ENCODE measurements at regions of chr3 and their contacts with region 1.

Region 1: GRCh38 chr3:97793420-97794019 is 28.3 kb upstream of the CRYBG3 start:
- DNase-seq: peak in 1 of 5 donors; percentile 8
- ATAC-seq: peak in 1 of 4 donors; percentile 26
- H3K4me3 ChIP-seq: no peak overlapping the region
- H3K27ac ChIP-seq: no peak overlapping the region
- H3K4me1 ChIP-seq: no peaks in the 10 kb centered on the region
- H3K27me3 ChIP-seq: no peaks in the 10 kb centered on the region
- CTCF ChIP-seq: peak; percentile 69 to 92 (median 83)
- POLR2A ChIP-seq: no peak

Region 2: GRCh38 chr3:97932387-97932801 is 138.9 kb after region 1 on chr3:
- intact Hi-C with region 1: loop called in 1 of 10 experiments (anchors 10 kb)
- DNase-seq: peak in 4 of 5 donors; percentile 20 to 32 (median 26)
- ATAC-seq: peak; percentile 73 to 82 (median 74)
- H3K4me3 ChIP-seq: no peak overlapping the region
- H3K27ac ChIP-seq: peak overlapping the region in 1 of 12 donors; percentile 27
- H3K4me1 ChIP-seq: peaks cover 0 to 14% (median 4%) of the 10 kb centered on the region in 12 donors
- H3K27me3 ChIP-seq: no peaks in the 10 kb centered on the region
- CTCF ChIP-seq: peak in 1 of 12 donors; percentile 20
- POLR2A ChIP-seq: no peak

Region 3: GRCh38 chr3:97940034-97940433 is 146.5 kb after region 1 on chr3:
- intact Hi-C with region 1: loop called in 7 of 10 experiments (anchors 2 to 10 kb)
- DNase-seq: no peak
- ATAC-seq: no peak
- H3K4me3 ChIP-seq: no peak overlapping the region
- H3K27ac ChIP-seq: no peak overlapping the region
- H3K4me1 ChIP-seq: no peaks in the 10 kb centered on the region
- H3K27me3 ChIP-seq: no peaks in the 10 kb centered on the region
- CTCF ChIP-seq: peak in 7 of 12 donors; percentile 5 to 42 (median 33)
- POLR2A ChIP-seq: no peak

Region 4: DNA sequence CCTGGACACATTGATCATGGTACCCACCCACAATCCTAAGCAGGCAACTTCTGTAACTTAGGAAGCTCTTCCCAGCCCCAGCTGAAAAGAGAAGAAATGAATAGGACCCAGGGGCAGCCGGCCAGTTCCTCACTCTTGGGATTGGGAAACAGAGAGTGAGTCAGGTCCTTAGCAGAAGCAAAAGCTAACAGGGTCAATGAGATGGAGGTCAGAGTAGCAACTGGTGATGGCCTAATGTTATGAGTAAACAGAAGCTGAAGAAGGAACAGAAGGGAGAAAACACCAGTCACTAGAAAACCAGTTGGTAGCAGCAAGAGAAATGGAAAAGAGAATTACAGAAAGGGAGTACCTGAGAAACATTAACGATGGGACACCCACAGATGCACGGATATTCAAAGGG is 158.8 kb after region 1 on chr3:
- intact Hi-C with region 1: loop called in 4 of 10 experiments (anchors 5 to 10 kb)
- DNase-seq: peak in 1 of 5 donors; percentile 44
- ATAC-seq: peak in 2 of 4 donors; percentile 65 to 84
- H3K4me3 ChIP-seq: no peak overlapping the region
- H3K27ac ChIP-seq: no peak overlapping the region
- H3K4me1 ChIP-seq: no peaks in the 10 kb centered on the region
- H3K27me3 ChIP-seq: no peaks in the 10 kb centered on the region
- CTCF ChIP-seq: no peak
- POLR2A ChIP-seq: no peak

Region 5: DNA sequence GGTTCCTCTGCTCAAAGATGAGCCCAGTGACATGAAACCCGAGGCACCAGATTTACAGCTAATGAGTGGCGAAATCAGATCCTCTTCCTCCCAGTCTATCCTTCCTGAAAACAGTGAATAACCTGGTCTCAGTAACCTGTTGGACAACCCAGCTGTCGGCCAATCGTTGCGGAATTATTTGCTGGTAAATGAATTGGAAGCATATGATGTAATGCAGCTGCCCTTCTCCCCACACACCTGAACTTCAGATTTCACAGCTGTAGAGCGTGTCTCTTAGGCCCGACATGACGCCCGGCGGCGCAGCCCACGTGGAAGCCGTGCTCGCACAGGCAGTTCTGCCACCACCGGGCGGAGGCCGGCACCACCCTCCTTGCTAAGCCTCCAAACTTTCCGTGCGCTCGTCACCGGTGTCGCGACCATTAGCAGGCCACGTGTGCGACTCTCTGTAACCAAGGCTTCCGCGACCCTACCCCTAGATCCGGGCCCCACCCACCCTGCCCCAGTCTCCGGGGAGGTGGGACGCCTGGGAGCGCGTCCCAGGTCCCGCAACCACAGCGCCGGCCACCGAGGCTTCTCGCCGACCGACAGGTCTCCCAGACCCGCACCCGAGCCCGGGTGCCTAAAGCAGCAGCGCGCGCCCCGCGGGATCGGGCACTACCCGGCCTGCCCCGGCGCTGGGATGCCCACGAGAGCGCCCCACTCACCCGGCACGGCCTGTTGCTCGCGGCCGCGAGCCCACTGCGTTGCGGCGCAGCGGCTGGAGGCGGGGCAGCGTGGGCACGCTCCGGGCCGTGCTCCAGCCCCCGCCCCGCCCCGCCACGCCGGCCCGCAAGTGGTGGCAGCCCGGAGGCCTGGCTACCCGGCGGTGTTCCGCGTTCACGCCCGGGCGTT is 178.4 kb after region 1 on chr3 and contains the start of gene RIOX2:
- intact Hi-C with region 1: loop called in 1 of 10 experiments (anchors 5 kb)
- DNase-seq: peak; percentile 73 to 88 (median 80)
- ATAC-seq: peak; percentile 80 to 99 (median 96)
- H3K4me3 ChIP-seq: peak within 1 kb of the TSS; percentile 72 to 94 (median 81)
- H3K27ac ChIP-seq: peak within 1 kb of the TSS in 11 of 12 donors; percentile 57 to 88 (median 80)
- H3K4me1 ChIP-seq: peaks cover 0 to 25% (median 8%) of the 10 kb centered on the region in 12 donors
- H3K27me3 ChIP-seq: no peaks in the 10 kb centered on the region
- CTCF ChIP-seq: peak in 4 of 12 donors; percentile 14 to 31 (median 26)
- POLR2A ChIP-seq: peak in 1 of 2 donors; percentile 76
- total RNA-seq, gene RIOX2: 10.3 to 15.9 (median 12.1) TPM

Region 6: DNA sequence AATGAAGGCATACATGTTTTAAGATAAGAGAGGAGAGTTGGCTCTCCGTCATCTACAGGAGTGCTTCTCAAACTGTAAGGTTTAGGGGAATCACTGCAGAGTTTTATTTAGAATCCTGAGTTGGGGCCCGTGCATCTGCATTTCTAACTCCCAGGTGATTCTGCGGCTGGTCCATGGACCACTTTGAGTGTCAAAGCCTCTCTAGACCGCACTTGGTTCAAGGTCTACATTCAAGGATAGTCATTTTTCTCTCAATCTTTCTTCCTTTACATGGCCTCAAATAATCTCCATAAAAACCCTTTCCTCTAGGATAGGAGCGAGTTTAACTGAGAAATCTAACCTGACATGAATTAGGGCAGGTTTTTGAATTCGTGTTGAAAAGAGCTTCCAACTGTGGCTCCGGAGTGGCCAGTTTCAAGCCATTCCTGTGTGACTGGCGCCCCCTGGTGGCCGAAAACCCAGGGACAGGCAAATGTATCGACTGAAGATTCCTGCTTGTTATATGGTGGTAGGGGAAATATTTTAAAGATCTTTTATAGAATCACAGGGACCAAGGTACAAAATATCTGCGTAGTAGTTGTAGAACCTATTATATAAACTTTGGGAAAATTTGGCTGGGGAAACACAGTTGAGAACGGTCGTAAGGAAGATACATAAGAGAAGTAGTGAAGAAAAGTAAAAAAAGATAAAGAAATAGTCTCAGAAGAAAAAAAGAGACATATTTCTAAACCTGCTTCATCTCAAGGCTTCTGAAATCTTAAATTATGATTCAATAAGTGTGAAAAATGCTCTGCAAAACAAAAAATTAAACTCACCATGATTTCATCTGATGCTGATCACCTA is 229.7 kb after region 1 on chr3:
- intact Hi-C with region 1: loop called (anchors 1 to 2 kb)
- DNase-seq: peak; percentile 80 to 94 (median 83)
- ATAC-seq: peak; percentile 77 to 84 (median 80)
- H3K4me3 ChIP-seq: no peak overlapping the region
- H3K27ac ChIP-seq: no peak overlapping the region
- H3K4me1 ChIP-seq: peaks cover 0 to 8% (median 0%) of the 10 kb centered on the region in 12 donors
- H3K27me3 ChIP-seq: no peaks in the 10 kb centered on the region
- CTCF ChIP-seq: peak; percentile 92 to 99 (median 97)
- POLR2A ChIP-seq: no peak

Measured in heart left ventricle (tissue), 16 donors.